ENCODE measurements at regions of chr1 and their contacts with region 1.

Region 1: DNA sequence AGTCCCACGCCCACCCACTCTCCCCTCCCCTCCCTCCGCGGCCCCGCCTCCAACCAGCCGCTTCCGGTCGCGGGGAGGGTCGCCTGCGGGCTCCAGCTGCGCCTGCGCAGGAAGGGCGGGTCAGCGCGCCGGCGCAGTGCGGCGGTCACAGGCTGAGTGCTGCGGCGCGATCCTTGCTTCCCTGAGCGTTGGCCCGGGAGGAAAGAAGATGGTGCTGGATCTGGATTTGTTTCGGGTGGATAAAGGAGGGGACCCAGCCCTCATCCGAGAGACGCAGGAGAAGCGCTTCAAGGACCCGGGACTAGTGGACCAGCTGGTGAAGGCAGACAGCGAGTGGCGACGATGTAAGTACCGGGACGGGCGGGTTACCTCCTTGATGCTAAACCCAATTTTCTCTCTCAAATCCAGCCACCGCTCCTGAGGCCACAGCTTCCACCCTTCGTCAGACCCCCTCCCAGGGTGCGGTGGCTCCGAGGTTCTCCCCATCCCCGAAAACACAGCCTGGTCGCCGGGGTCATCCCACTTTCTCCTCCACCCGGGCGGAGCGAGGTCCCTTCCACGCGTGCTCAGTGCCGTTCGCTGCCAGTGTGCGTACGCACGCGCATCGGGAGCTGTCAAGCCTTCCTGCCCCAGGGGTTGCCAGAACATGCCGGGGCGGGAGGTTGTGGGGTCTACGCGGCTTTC is at the start of gene SARS1:
- DNase-seq: peak; percentile 86
- H3K4me3 Mint-ChIP-seq: peak within 1 kb of the TSS; percentile 98
- H3K27ac Mint-ChIP-seq: peak within 1 kb of the TSS; percentile 89
- H3K4me1 Mint-ChIP-seq: peaks cover 28% of the 10 kb centered on the region
- H3K27me3 Mint-ChIP-seq: peaks cover 3% of the 10 kb centered on the region
- total RNA-seq, gene SARS1: 128 and 129 TPM in 2 replicates

Region 2: GRCh38 chr1:109229531-109230127 is 15.7 kb after region 1 on chr1:
- intact Hi-C with region 1: no loop called
- DNase-seq: no peak
- H3K4me3 Mint-ChIP-seq: no peak overlapping the region
- H3K27ac Mint-ChIP-seq: no peak overlapping the region
- H3K4me1 Mint-ChIP-seq: peaks cover 6% of the 10 kb centered on the region
- H3K27me3 Mint-ChIP-seq: no peaks in the 10 kb centered on the region

Region 3: DNA sequence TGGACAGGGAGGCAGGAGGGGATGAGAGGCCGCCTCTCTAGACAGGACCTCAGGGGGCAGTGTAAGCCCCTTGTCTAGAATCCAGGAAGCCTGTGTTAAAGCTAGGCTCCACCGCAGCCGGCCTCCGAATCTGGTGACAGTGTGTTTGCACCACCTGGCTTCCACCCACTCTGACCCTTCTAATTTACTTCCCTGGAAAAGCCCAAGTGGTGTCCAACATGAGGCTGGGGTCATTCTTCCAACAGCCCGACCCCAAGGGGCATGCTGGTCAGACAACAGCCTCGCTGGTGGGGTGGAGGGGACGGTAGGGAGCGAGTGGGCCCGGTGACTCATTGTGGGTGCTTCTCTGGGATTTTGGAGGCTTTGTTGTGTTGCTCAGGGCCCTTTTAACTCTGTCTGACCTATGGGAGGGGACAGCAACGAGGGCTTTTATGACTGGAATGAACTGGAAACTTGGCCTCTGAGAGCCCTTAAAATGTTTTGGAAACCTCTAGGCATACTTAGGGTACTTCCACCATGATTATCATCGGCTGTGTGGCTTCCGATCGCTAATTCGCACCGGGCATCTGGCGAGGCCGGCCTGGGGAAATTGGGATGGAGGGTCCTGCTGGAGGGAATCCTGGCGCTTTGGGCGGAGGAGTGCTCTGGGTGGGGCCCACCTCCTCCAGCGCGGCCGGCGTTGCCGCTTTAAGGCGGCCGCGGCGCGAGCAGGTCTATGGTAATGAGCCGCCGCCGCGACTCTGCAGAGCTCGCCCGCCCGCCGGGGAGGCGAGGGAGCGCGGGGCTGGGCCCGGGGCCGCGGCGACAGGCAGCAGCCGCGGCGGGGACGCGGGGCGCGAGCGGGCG is 35.1 kb after region 1 on chr1 and contains the start of gene CELSR2:
- intact Hi-C with region 1: loop called (anchors 5 kb)
- DNase-seq: peak; percentile 63
- H3K4me3 Mint-ChIP-seq: peak within 1 kb of the TSS; percentile 42
- H3K27ac Mint-ChIP-seq: no peak within 1 kb of the TSS
- H3K4me1 Mint-ChIP-seq: peaks cover 4% of the 10 kb centered on the region
- H3K27me3 Mint-ChIP-seq: peaks cover 33% of the 10 kb centered on the region
- total RNA-seq, gene CELSR2: 3.8 and 4.3 TPM in 2 replicates

Measured in activated T-helper 2 cell treated with anti-CD3 and anti-CD28 coated beads, Interferon-gamma antibody, Interleukin-2, Interleukin-4, amounts not matched to agents 10 μg/mL and 5 μg/mL and 100 μg/mL, durations not matched to agents 14 hours and 24 hours and 36 hours (primary cell).